ENCODE measurements at regions of chr9 and their contacts with region 1.

Region 1: DNA sequence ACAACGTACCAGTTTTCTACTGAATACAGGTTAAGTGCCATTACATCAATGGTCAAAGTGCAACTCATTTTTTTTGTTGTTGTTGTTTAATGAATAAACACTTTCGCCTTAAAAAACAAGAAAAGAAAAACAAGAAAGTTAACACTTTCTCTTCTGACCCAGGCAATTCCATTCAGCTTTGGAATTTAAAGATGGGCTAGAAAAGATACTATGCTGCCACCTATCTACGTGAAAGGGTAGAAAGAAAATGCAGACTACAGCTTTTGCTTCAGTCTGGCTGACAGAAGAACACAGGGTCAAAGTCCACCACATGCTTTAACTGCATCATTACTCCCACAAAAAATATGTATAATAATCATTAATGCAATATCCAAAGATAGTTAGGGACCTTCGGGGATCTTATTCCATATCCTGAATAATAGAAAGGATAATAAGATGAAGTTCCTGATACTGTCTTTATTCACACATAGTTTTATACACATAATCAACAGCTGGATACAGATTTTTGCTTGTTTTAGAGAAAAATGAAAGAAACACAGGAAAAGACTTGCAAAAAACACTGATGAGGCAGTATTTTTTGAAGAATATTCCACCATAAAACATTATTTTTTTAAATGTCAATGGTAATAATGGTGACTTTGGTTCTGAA is 40.4 kb downstream of the ZDHHC21 start:
- DNase-seq: no peak
- ATAC-seq: no peak
- H3K4me3 ChIP-seq: no peak overlapping the region
- H3K27ac ChIP-seq: no peak overlapping the region
- H3K4me1 ChIP-seq: no peaks in the 10 kb centered on the region
- H3K27me3 ChIP-seq: no peaks in the 10 kb centered on the region
- CTCF ChIP-seq: peak; percentile 9 to 64 (median 47)
- POLR2A ChIP-seq: no peak

Region 2: DNA sequence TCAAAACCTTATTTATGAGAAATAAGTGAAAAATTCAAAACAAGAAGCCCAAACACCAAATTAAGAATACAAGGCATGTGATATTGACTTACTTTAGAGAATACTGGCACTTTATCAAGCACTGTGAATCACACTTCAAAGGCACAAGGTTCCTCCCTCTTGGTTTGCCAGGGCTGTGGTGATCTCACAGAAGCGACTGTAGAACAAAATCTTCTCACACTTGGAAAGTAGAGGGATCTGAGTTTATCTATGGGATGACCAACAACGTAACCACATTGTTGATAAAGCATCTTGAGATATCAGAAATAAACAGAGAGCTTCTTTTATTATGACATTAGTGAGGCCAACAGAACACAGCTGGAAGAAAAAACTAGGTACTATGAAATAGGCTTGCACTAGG is 634.8 kb before region 1 on chr9:
- intact Hi-C with region 1: loop called in 1 of 10 experiments (anchors 10 kb)
- DNase-seq: no peak
- ATAC-seq: no peak
- H3K4me3 ChIP-seq: no peak overlapping the region
- H3K27ac ChIP-seq: peak overlapping the region in 5 of 12 donors; percentile 6 to 28 (median 11)
- H3K4me1 ChIP-seq: peaks cover 0 to 36% (median 9%) of the 10 kb centered on the region in 12 donors
- H3K27me3 ChIP-seq: no peaks in the 10 kb centered on the region
- CTCF ChIP-seq: no peak
- POLR2A ChIP-seq: no peak

Region 3: DNA sequence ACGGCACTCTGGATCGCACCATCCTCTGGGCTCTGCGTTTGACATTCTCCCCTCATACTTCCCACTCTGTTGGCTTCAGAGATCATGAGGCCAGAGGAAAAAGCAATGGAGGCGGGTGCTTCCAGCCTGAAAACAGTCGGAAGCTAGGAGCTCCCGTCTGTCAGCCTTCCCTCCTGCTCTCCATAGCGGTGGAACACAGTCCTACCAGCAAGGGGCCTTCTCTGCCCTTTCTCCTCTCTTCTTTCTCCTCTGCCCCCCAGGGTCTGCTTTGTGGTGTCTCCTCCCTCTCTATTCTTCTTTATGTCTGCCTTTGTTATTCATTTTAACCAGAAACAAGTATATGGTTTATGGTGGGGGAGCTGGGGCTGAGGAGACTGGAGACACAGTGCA is 186.4 kb before region 1 on chr9:
- intact Hi-C with region 1: loop called in 9 of 10 experiments (anchors 2 to 10 kb)
- DNase-seq: no peak
- ATAC-seq: no peak
- H3K4me3 ChIP-seq: no peak overlapping the region
- H3K27ac ChIP-seq: no peak overlapping the region
- H3K4me1 ChIP-seq: no peaks in the 10 kb centered on the region
- H3K27me3 ChIP-seq: no peaks in the 10 kb centered on the region
- CTCF ChIP-seq: no peak
- POLR2A ChIP-seq: no peak

Region 4: GRCh38 chr9:14532716-14533115 is 120.1 kb before region 1 on chr9:
- intact Hi-C with region 1: loop called in 1 of 10 experiments (anchors 10 kb)
- DNase-seq: no peak
- ATAC-seq: no peak
- H3K4me3 ChIP-seq: no peak overlapping the region
- H3K27ac ChIP-seq: no peak overlapping the region
- H3K4me1 ChIP-seq: peaks cover 0 to 22% (median 8%) of the 10 kb centered on the region in 12 donors
- H3K27me3 ChIP-seq: no peaks in the 10 kb centered on the region
- CTCF ChIP-seq: no peak
- POLR2A ChIP-seq: no peak

Region 5: GRCh38 chr9:14693206-14693861 is 40.5 kb after region 1 on chr9 and contains the start of gene ZDHHC21:
- intact Hi-C with region 1: loop called in 1 of 10 experiments (anchors 2 kb)
- DNase-seq: peak; percentile 78 to 89 (median 83)
- ATAC-seq: peak; percentile 88 to 99 (median 98)
- H3K4me3 ChIP-seq: peak within 1 kb of the TSS; percentile 70 to 95 (median 79)
- H3K27ac ChIP-seq: peak within 1 kb of the TSS in 10 of 12 donors; percentile 24 to 75 (median 60)
- H3K4me1 ChIP-seq: peaks cover 0 to 17% (median 8%) of the 10 kb centered on the region in 12 donors
- H3K27me3 ChIP-seq: peaks cover 0 to 5% (median 0%) of the 10 kb centered on the region in 9 donors
- CTCF ChIP-seq: no peak
- POLR2A ChIP-seq: peak in 1 of 2 donors; percentile 38
- total RNA-seq, gene ZDHHC21: 5.2 to 9.3 (median 7.7) TPM

Region 6: DNA sequence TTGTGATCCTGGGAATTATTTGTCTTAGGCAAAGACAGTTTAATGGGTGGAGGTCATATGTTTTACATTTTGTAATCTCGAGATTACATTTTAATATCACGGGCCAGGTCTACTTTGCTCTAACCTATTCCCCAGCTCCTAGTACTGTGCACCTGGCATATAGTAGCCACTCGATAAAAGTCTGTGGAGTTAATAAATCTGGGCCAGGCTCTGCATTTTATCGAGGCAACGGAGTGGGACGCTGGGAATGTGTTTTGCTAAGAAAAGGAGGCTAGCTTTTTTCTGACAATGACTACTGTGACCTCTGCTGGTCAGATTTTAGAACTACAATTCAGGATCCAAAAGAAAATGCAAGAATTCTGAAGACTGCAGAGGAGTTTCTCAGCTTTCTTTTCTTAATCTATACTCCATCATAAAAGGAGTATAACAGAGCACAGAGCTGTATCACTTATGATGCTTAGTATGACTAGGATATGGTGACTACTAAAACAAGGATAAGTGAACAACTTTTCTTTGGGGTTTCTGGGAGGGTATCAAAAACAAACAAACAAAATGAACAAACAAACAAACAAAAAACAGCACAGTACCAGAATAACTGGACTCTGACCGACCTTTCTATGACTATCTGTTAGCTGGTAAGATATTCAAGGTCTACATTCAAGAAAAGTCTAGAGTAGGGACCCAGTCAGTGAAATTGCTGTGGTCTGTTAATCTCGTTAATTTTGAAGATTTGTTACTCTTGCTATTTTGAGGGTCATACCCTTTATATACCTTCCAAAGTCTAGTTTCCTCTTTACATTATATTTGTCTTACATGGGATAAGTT is 115.8 kb after region 1 on chr9:
- intact Hi-C with region 1: no loop called
- DNase-seq: no peak
- ATAC-seq: peak in 3 of 4 donors; percentile 27 to 52 (median 42)
- H3K4me3 ChIP-seq: no peak overlapping the region
- H3K27ac ChIP-seq: no peak overlapping the region
- H3K4me1 ChIP-seq: peaks cover 0 to 4% (median 0%) of the 10 kb centered on the region in 12 donors
- H3K27me3 ChIP-seq: no peaks in the 10 kb centered on the region
- CTCF ChIP-seq: peak; percentile 64 to 83 (median 69)
- POLR2A ChIP-seq: no peak

Region 7: GRCh38 chr9:15096972-15097371 is 444.1 kb after region 1 on chr9:
- intact Hi-C with region 1: no loop called
- DNase-seq: no peak
- ATAC-seq: no peak
- H3K4me3 ChIP-seq: no peak overlapping the region
- H3K27ac ChIP-seq: no peak overlapping the region
- H3K4me1 ChIP-seq: no peaks in the 10 kb centered on the region
- H3K27me3 ChIP-seq: no peaks in the 10 kb centered on the region
- CTCF ChIP-seq: peak in 1 of 12 donors; percentile 30
- POLR2A ChIP-seq: no peak

Measured in heart left ventricle (tissue), 16 donors.